ENCODE measurements at regions of chr2 and their contacts with region 1.

Region 1: GRCh38 chr2:205474741-205475415 is 207.4 kb upstream of the NRP2 start:
- DNase-seq: no peak
- H3K4me3 Mint-ChIP-seq: no peak overlapping the region
- H3K27ac Mint-ChIP-seq: no peak overlapping the region
- H3K4me1 Mint-ChIP-seq: peaks cover 2% of the 10 kb centered on the region
- H3K27me3 Mint-ChIP-seq: peaks cover 10% of the 10 kb centered on the region

Region 2: GRCh38 chr2:205377324-205377723 is 97.6 kb before region 1 on chr2:
- CTCF ChIA-PET with region 1: no interaction called
- intact Hi-C with region 1: loop called (anchors 1 kb)
- DNase-seq: peak; percentile 8
- H3K4me3 Mint-ChIP-seq: no peak overlapping the region
- H3K27ac Mint-ChIP-seq: no peak overlapping the region
- H3K4me1 Mint-ChIP-seq: peaks cover 32% of the 10 kb centered on the region
- H3K27me3 Mint-ChIP-seq: no peaks in the 10 kb centered on the region

Measured in activated naive CD4-positive, alpha-beta T cell treated with anti-CD3 and anti-CD28 coated beads for 36 hours (primary cell).